Endothelial cell of umbilical vein (primary cell): ENCODE measurements at regions of chr5 and their contacts with region 1.

Region 1: GRCh38 chr5:138503487-138504270 is 38.4 kb downstream of the EGR1 start:
- DNase-seq: peak; percentile 66
- H3K4me3 ChIP-seq: no peak overlapping the region
- H3K27ac ChIP-seq: no peak overlapping the region
- H3K4me1 ChIP-seq: no peaks in the 10 kb centered on the region
- H3K27me3 ChIP-seq: no peaks in the 10 kb centered on the region
- CTCF ChIP-seq: peak; percentile 71 to 83
- POLR2A ChIP-seq: no peak

Region 2: GRCh38 chr5:138352071-138352721 is 151.5 kb before region 1 on chr5 and contains the start of gene KDM3B:
- CTCF ChIA-PET with region 1: no interaction called
- POLR2A ChIA-PET with region 1: no interaction called
- dilution Hi-C with region 1: no loop called
- intact Hi-C with region 1: loop called (anchors 5 kb)
- DNase-seq: peak; percentile 79
- H3K4me3 ChIP-seq: peak within 1 kb of the TSS; percentile 58 to 95 (median 78)
- H3K27ac ChIP-seq: peak within 1 kb of the TSS; percentile 65
- H3K4me1 ChIP-seq: peaks cover 14% of the 10 kb centered on the region
- H3K27me3 ChIP-seq: no peaks in the 10 kb centered on the region
- CTCF ChIP-seq: peak; percentile 99 to 100
- POLR2A ChIP-seq: peak; percentile 41
- total RNA-seq, gene KDM3B: 52.6 and 55.7 TPM in 2 replicates

Region 3: GRCh38 chr5:138449501-138450239 is 54.0 kb before region 1 on chr5:
- CTCF ChIA-PET with region 1: interaction called, 207 read pairs
- POLR2A ChIA-PET with region 1: no interaction called
- dilution Hi-C with region 1: no loop called
- intact Hi-C with region 1: loop called (anchors 1 kb)
- DNase-seq: peak; percentile 80
- H3K4me3 ChIP-seq: no peak overlapping the region
- H3K27ac ChIP-seq: no peak overlapping the region
- H3K4me1 ChIP-seq: no peaks in the 10 kb centered on the region
- H3K27me3 ChIP-seq: no peaks in the 10 kb centered on the region
- CTCF ChIP-seq: peak; percentile 95 to 98
- POLR2A ChIP-seq: no peak

Region 4: DNA sequence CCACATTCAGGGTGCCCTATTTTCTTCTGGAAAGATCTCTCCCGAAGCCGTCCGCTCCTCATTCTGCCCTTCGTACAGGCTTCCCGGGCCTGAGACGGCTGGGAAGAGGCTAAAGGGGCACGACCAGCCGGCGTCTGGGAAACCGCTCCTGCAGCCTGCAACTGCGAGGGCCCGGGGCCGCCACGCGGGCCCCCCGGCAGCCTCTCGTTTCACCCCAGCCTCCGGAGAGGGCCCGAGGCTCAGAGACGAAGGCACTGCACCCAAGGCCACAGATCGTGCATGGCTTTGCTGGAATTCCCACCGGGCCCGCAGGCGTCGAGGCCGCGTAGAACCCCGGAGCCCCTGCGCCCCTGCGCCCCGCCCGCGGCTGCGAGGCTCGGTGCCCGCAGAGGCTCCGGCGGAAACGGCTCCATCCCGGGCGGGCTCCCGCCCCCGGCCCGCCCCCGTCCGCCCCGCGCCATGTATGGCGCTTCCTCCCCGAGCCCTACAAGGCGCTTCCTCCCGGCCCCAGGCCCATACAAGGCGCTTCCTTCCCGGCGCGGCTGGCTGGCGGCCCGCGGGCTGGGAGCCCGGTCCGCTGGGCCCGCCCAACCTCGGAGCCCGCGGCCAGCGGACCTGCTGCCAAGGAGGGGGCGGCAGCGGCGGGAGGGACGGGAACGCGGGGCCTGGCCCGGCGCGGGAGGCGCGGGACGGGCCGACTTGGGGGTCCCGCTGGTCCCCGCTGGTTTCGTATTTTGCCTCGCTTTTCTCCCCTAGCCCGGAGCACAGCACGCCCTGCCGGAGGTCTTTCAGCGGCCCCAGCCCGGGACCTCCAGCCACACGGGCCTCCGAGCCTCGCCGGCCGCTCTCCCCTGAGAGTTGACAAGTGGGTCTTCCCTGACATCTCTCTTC is 11.8 kb before region 1 on chr5:
- CTCF ChIA-PET with region 1: interaction called, 16 read pairs
- POLR2A ChIA-PET with region 1: no interaction called
- dilution Hi-C with region 1: no loop called
- intact Hi-C with region 1: no loop called
- DNase-seq: peak; percentile 84
- H3K4me3 ChIP-seq: peak overlapping the region; percentile 24 to 53 (median 33)
- H3K27ac ChIP-seq: no peak overlapping the region
- H3K4me1 ChIP-seq: peaks cover 9% of the 10 kb centered on the region
- H3K27me3 ChIP-seq: peaks cover 11 to 22% of the 10 kb centered on the region in 2 experiments
- CTCF ChIP-seq: no peak
- POLR2A ChIP-seq: no peak

Region 5: GRCh38 chr5:138832218-138832617 is 328.5 kb after region 1 on chr5:
- CTCF ChIA-PET with region 1: no interaction called
- POLR2A ChIA-PET with region 1: no interaction called
- dilution Hi-C with region 1: no loop called
- intact Hi-C with region 1: no loop called
- DNase-seq: no peak
- H3K4me3 ChIP-seq: no peak overlapping the region
- H3K27ac ChIP-seq: no peak overlapping the region
- H3K4me1 ChIP-seq: no peaks in the 10 kb centered on the region
- H3K27me3 ChIP-seq: no peaks in the 10 kb centered on the region
- CTCF ChIP-seq: no peak
- POLR2A ChIP-seq: no peak